ENCODE measurements at regions of chr6 and their contacts with region 1.

Region 1: DNA sequence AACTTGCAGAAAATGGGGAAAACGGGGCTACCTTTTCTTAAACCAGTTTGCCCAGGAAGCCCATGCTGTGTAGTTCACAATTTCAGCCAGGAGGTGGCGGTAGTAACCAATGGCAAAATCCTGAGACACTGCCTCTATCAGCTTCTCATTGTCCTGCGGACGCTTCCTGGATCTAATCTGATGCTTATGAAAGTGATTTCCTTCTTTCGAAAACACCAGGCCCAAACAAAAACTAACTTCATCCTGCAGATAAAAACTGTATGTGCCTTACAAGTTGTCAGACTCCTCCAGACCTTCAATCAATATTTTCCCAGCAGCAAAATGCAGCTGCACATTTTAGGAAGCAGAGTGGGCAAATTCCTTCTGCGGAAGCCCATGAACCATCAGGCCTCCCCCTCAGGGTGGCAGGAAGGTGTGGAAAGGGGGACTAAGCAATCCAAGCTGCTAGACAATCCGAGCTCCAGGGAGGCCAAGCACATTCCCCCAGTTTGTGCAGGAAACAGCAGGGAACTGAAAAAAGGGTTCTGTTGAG is 88.5 kb downstream of the LY86 start:
- DNase-seq: peak; percentile 51 to 85
- H3K4me3 ChIP-seq: no peak overlapping the region
- H3K4me1 ChIP-seq: no peaks in the 10 kb centered on the region
- H3K27me3 ChIP-seq: no peaks in the 10 kb centered on the region

Region 2: GRCh38 chr6:7238900-7239589 is 562.1 kb after region 1 on chr6:
- in situ Hi-C with region 1: loop called (anchors 5 kb)
- DNase-seq: peak; percentile 65 to 93
- H3K4me3 ChIP-seq: no peak overlapping the region
- H3K4me1 ChIP-seq: peaks cover 16% of the 10 kb centered on the region
- H3K27me3 ChIP-seq: no peaks in the 10 kb centered on the region

Region 3: GRCh38 chr6:7615611-7616383 is 938.8 kb after region 1 on chr6:
- in situ Hi-C with region 1: loop called (anchors 25 kb)
- DNase-seq: peak; percentile 57 to 67
- H3K4me3 ChIP-seq: no peak overlapping the region
- H3K4me1 ChIP-seq: no peaks in the 10 kb centered on the region; the same call in 1 of the 2 replicates
- H3K27me3 ChIP-seq: no peaks in the 10 kb centered on the region

Measured in HAP-1 (cell line).